CD14-positive monocyte (primary cell): ENCODE measurements at regions of chr14 and their contacts with region 1.

Region 1: GRCh38 chr14:104795788-104796686 is 489 bp upstream of the AKT1 start:
- DNase-seq: peak in 2 of 3 donors; percentile 32 to 39
- H3K4me3 ChIP-seq: peak overlapping the region; percentile 39 to 77 (median 50)
- H3K4me3 Mint-ChIP-seq: peak overlapping the region; percentile 74 to 79
- H3K27ac ChIP-seq: peak overlapping the region; percentile 18 to 73
- H3K27ac Mint-ChIP-seq: peak overlapping the region in 5 of 7 donors; percentile 31 to 70 (median 46)
- H3K4me1 ChIP-seq: peaks cover 32 to 45% of the 10 kb centered on the region in 2 donors
- H3K4me1 Mint-ChIP-seq: peaks cover 42% of the 10 kb centered on the region
- H3K27me3 ChIP-seq: peaks cover 0 to 24% of the 10 kb centered on the region in 2 donors
- H3K27me3 Mint-ChIP-seq: peaks cover 19 to 42% (median 19%) of the 10 kb centered on the region in 3 donors
- CTCF ChIP-seq: no peak

Region 2: DNA sequence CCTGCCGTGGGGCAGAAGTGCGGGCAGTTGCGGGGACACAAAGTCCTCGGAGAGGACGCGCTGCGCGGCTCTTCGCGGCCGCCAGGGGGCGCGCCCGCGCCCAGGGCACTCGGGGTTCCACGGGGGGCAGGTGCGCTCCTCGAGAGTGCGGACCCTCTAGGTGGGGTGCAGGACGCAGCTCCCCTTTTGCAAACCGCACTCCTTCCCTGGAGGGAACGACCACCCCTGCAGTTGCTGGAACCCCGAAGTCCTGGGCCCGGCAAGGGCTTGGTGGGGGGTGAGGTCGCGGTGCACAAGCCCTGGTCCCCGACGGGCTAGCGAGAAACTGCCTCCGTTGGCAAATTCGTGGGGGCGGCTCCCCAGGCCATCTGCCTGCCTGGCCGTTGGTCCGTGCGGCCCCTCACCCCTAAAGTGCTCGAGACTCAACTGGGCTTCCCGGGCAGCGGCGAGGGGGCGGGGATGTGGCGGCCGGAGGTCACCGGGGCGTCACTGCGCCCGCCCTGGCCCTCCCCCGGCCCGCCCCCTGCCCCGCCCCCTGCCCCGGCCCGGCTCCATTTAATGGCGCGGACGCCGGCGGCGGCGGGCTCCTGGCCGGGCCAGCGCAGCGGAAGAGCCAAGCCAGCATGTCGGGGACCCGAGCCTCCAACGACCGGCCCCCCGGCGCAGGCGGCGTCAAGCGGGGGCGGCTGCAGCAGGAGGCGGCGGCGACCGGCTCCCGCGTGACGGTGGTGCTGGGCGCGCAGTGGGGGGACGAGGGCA is 72.2 kb before region 1 on chr14 and contains the start of gene ADSS1:
- intact Hi-C with region 1: loop called in 1 of 2 experiments (anchors 5 kb)
- DNase-seq: peak; percentile 45 to 53 (median 52)
- H3K4me3 ChIP-seq: peak within 1 kb of the TSS; percentile 64 to 98 (median 89)
- H3K4me3 Mint-ChIP-seq: peak within 1 kb of the TSS; percentile 76 to 82
- H3K27ac ChIP-seq: peak within 1 kb of the TSS in 1 of 2 donors; percentile 52
- H3K27ac Mint-ChIP-seq: peak within 1 kb of the TSS in 6 of 7 donors; percentile 24 to 72 (median 42)
- H3K4me1 ChIP-seq: peaks cover 14 to 23% of the 10 kb centered on the region in 2 donors
- H3K4me1 Mint-ChIP-seq: peaks cover 8% of the 10 kb centered on the region
- H3K27me3 ChIP-seq: peaks cover 0 to 8% of the 10 kb centered on the region in 2 donors
- H3K27me3 Mint-ChIP-seq: peaks cover 3 to 23% (median 7%) of the 10 kb centered on the region in 3 donors
- CTCF ChIP-seq: peak; percentile 100
- polyA plus RNA-seq, gene ADSS1: 0.61 to 3.7 (median 0.64) TPM

Region 3: DNA sequence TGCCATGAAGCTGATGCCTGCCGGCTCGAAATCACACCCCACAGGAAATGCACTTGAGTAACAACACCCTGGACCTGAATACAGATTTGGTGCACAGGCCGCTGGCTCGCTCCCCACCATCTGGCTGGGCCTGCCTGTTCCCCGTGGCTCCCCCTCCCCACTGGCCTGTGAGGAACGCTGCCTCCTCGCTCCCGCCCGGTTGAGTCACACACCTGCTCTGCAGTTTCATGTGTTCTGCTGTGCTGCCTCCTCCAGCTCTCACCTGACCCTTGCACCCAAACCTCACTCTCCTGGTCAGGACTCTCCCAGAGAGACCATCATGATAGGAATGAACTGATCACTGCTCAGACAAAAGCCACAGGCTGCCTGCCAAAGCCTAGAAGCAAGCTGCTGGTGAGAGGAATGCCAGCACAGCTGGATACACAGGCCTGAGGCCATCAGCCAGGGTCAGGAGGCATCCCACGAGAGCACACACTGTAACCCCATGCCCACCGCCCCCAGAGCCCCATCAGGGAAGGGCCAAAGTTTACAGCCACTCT is 46.9 kb before region 1 on chr14:
- intact Hi-C with region 1: no loop called
- DNase-seq: no peak
- H3K4me3 ChIP-seq: no peak overlapping the region
- H3K4me3 Mint-ChIP-seq: no peak overlapping the region
- H3K27ac ChIP-seq: no peak overlapping the region
- H3K27ac Mint-ChIP-seq: peak overlapping the region in 1 of 7 donors; percentile 71
- H3K4me1 ChIP-seq: peaks cover 14 to 35% of the 10 kb centered on the region in 2 donors
- H3K4me1 Mint-ChIP-seq: peaks cover 24% of the 10 kb centered on the region
- H3K27me3 ChIP-seq: no peaks in the 10 kb centered on the region
- H3K27me3 Mint-ChIP-seq: no peaks in the 10 kb centered on the region
- CTCF ChIP-seq: no peak

Region 4: GRCh38 chr14:104826189-104826860 is 30.3 kb after region 1 on chr14:
- intact Hi-C with region 1: loop called in 1 of 2 experiments (anchors 2 kb)
- DNase-seq: peak; percentile 78 to 85 (median 82)
- H3K4me3 ChIP-seq: peak overlapping the region; percentile 48 to 76 (median 52)
- H3K4me3 Mint-ChIP-seq: peak overlapping the region; percentile 75 to 89
- H3K27ac ChIP-seq: no peak overlapping the region
- H3K27ac Mint-ChIP-seq: peak overlapping the region in 1 of 7 donors; percentile 32
- H3K4me1 ChIP-seq: peaks cover 18 to 25% of the 10 kb centered on the region in 2 donors
- H3K4me1 Mint-ChIP-seq: peaks cover 23% of the 10 kb centered on the region
- H3K27me3 ChIP-seq: peaks cover 13 to 31% of the 10 kb centered on the region in 2 donors
- H3K27me3 Mint-ChIP-seq: peaks cover 34 to 53% (median 44%) of the 10 kb centered on the region in 3 donors
- CTCF ChIP-seq: peak; percentile 75

Region 5: DNA sequence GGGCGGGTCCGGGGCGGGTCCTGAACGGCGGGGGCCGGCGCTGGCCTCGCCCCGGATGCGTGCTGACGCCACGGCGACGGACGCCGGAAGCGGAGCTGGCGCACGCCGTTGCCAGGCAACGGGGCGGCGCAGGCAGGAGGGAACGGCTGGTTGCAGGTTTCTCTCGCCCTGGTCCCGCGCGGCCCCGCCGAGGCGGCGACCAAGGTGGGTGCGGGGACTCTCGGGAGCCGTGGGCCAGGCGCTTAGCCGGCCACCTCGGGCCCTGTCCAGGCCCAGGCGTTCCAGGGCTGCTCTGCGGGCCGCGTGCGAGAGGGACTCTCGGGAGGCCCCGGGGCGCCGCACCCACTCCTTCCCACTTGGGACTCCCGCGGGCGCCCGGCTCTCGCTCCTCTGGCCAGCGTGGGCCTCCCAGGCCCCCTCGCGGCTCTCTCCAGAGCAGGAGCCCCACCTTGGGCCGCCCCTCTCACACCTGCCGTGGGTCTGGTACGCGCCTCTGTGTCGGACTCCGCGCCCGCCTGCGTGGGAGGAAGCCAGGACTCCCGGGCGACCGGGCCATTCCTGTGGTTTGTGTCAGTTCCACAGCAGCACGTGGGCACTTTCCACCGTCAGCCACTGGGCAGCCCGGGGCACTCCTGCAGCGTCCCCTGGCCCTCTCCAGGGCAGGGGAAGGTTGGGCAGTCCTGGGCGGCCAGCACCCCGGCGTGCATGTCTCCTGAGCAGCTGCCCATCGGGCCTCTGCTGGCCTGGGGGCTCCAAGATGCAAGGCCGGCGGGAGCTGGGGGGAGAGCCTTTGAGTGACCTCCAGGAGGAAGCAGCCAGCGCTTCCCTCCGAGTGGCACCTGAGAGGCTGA is 189.9 kb after region 1 on chr14 and contains the start of gene CLBA1:
- intact Hi-C with region 1: loop called in 1 of 2 experiments (anchors 10 kb)
- DNase-seq: peak; percentile 88 to 89 (median 89)
- H3K4me3 ChIP-seq: peak within 1 kb of the TSS; percentile 44 to 77 (median 52)
- H3K4me3 Mint-ChIP-seq: peak within 1 kb of the TSS; percentile 73 to 81
- H3K27ac ChIP-seq: peak within 1 kb of the TSS in 1 of 2 donors; percentile 51
- H3K27ac Mint-ChIP-seq: peak within 1 kb of the TSS; percentile 41 to 91 (median 76)
- H3K4me1 ChIP-seq: peaks cover 17 to 23% of the 10 kb centered on the region in 2 donors
- H3K4me1 Mint-ChIP-seq: peaks cover 13% of the 10 kb centered on the region
- H3K27me3 ChIP-seq: peaks cover 0 to 5% of the 10 kb centered on the region in 2 donors
- H3K27me3 Mint-ChIP-seq: peaks cover 2 to 17% (median 8%) of the 10 kb centered on the region in 3 donors
- CTCF ChIP-seq: no peak
- polyA plus RNA-seq, gene CLBA1: 0.62 to 0.76 (median 0.63) TPM